ENCODE measurements at regions of chr7 and their contacts with region 1.

Region 1: DNA sequence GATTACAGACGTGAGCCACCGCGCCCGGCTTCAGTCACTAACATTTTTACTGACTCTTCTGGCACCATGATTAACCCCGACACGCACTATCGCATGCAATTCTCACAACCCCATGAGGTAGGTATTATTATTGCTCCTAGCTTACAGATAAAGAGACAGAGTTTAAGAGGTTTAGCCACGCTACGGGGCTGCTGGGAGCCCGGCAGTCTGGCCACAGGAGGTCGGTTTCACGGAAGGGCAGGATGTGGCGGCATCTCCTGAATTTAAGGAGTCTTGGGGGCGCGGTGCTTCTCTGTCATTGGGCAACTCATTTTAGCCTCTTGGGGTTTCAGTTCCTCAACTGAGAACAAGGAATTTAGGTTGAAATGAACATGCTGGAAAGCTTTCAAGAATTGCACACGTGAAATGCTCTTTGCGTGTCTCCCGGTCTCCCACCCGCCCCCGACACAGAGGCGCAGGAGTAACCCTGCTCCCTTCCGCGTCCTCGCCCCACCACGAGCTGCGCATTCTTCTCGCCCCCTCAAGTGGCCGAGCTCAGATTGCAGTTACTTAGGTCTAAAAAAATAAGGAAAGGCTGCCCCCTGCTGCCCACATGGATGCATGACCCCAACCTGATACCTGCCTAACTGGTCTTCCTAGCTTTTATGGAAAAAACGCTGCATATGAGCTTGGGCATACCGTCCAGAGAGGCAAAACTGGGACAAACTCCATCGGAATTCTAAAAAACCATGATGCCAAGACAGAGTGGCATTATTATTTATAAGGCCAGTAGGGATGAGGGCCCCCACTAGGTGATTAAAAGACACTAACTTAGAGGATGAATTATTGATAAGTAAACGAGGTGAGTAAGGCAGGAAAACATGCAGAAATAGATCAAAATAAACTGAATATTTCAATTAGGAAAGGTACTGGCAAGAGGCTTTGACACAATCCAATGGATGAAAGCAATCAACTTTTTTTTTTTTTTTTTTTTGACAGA is 12.4 kb downstream of the PRSS2 start:
- DNase-seq: peak; percentile 62 to 90 (median 74)
- ATAC-seq: peak; percentile 43
- H3K4me3 ChIP-seq: peak overlapping the region; percentile 54
- H3K4me3 Mint-ChIP-seq: peak overlapping the region; percentile 91
- H3K27ac ChIP-seq: no peak overlapping the region
- H3K27ac Mint-ChIP-seq: peak overlapping the region; percentile 98
- H3K4me1 ChIP-seq: peaks cover 13% of the 10 kb centered on the region
- H3K4me1 Mint-ChIP-seq: peaks cover 22% of the 10 kb centered on the region
- H3K27me3 ChIP-seq: no peaks in the 10 kb centered on the region
- H3K27me3 Mint-ChIP-seq: no peaks in the 10 kb centered on the region
- CTCF ChIP-seq: peak; percentile 74

Region 2: GRCh38 chr7:142669074-142669654 is 114.0 kb before region 1 on chr7:
- CTCF ChIA-PET with region 1: interaction called, 8 read pairs
- POLR2A ChIA-PET with region 1: interaction called, 7 read pairs
- intact Hi-C with region 1: loop called (anchors 1 kb)
- DNase-seq: peak in 3 of 14 experiments; percentile 40 to 52 (median 51)
- ATAC-seq: no peak
- H3K4me3 ChIP-seq: no peak overlapping the region
- H3K4me3 Mint-ChIP-seq: no peak overlapping the region
- H3K27ac ChIP-seq: no peak overlapping the region
- H3K27ac Mint-ChIP-seq: peak overlapping the region; percentile 84
- H3K4me1 ChIP-seq: peaks cover 9% of the 10 kb centered on the region
- H3K4me1 Mint-ChIP-seq: peaks cover 35% of the 10 kb centered on the region
- H3K27me3 ChIP-seq: no peaks in the 10 kb centered on the region
- H3K27me3 Mint-ChIP-seq: no peaks in the 10 kb centered on the region
- CTCF ChIP-seq: peak; percentile 43

Region 3: GRCh38 chr7:142711746-142712619 is 71.2 kb before region 1 on chr7:
- CTCF ChIA-PET with region 1: interaction called, 10 read pairs
- POLR2A ChIA-PET with region 1: interaction called, 24 read pairs
- intact Hi-C with region 1: loop called (anchors 5 kb)
- DNase-seq: peak in 8 of 14 experiments; percentile 9 to 66 (median 36)
- ATAC-seq: peak; percentile 56
- H3K4me3 ChIP-seq: peak overlapping the region; percentile 51
- H3K4me3 Mint-ChIP-seq: peak overlapping the region; percentile 84
- H3K27ac ChIP-seq: peak overlapping the region; percentile 40 to 53
- H3K27ac Mint-ChIP-seq: peak overlapping the region; percentile 80
- H3K4me1 ChIP-seq: peaks cover 44% of the 10 kb centered on the region
- H3K4me1 Mint-ChIP-seq: peaks cover 71% of the 10 kb centered on the region
- H3K27me3 ChIP-seq: no peaks in the 10 kb centered on the region
- H3K27me3 Mint-ChIP-seq: no peaks in the 10 kb centered on the region
- CTCF ChIP-seq: peak; percentile 52

Region 4: DNA sequence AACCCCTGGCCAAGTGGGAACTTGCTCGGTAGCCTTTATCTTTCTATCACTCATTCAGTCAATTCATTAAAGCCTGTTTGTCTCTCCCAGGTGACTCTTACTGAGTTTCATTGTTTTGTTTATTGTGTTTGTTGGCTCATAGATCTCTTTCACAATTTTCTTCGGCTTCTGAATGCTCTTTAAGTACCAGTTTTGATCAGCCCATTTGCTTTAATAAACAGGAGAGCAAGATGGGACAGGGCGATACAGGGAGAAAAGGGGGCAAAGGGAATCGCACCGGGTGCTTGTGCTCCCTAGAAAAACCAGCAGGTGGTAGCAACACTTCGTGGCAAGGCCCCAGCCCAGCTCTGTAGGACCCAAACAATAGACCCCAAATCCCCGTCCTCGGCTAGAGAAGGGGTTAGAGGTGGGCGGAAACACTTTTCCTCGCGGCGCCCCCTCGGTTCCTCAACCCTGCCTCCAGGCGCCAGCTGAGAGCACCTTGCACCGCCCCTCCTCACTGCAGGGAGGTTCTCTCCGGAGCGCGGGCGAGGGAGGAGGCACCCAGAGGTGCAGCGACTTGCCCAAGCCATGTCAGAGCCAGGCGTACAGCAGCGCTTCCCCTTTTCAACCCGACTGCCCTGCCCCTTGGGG is 70.6 kb after region 1 on chr7:
- CTCF ChIA-PET with region 1: interaction called, 4 read pairs
- POLR2A ChIA-PET with region 1: interaction called, 14 read pairs
- intact Hi-C with region 1: no loop called
- DNase-seq: peak; percentile 44 to 83 (median 60)
- ATAC-seq: peak; percentile 82
- H3K4me3 ChIP-seq: peak overlapping the region; percentile 87
- H3K4me3 Mint-ChIP-seq: peak overlapping the region; percentile 95
- H3K27ac ChIP-seq: peak overlapping the region; percentile 24 to 41
- H3K27ac Mint-ChIP-seq: peak overlapping the region; percentile 85
- H3K4me1 ChIP-seq: peaks cover 30% of the 10 kb centered on the region
- H3K4me1 Mint-ChIP-seq: peaks cover 52% of the 10 kb centered on the region
- H3K27me3 ChIP-seq: no peaks in the 10 kb centered on the region
- H3K27me3 Mint-ChIP-seq: no peaks in the 10 kb centered on the region
- CTCF ChIP-seq: peak; percentile 90